Activated naive CD4-positive, alpha-beta T cell treated with anti-CD3 and anti-CD28 coated beads for 36 hours (primary cell): ENCODE measurements at regions of chr12 and their contacts with region 1.

Region 1: GRCh38 chr12:40117818-40118217 is 11.9 kb upstream of the SLC2A13 start:
- DNase-seq: no peak
- H3K4me3 Mint-ChIP-seq: no peak overlapping the region
- H3K27ac Mint-ChIP-seq: no peak overlapping the region
- H3K4me1 Mint-ChIP-seq: peaks cover 15% of the 10 kb centered on the region
- H3K27me3 Mint-ChIP-seq: peaks cover 22% of the 10 kb centered on the region

Region 2: DNA sequence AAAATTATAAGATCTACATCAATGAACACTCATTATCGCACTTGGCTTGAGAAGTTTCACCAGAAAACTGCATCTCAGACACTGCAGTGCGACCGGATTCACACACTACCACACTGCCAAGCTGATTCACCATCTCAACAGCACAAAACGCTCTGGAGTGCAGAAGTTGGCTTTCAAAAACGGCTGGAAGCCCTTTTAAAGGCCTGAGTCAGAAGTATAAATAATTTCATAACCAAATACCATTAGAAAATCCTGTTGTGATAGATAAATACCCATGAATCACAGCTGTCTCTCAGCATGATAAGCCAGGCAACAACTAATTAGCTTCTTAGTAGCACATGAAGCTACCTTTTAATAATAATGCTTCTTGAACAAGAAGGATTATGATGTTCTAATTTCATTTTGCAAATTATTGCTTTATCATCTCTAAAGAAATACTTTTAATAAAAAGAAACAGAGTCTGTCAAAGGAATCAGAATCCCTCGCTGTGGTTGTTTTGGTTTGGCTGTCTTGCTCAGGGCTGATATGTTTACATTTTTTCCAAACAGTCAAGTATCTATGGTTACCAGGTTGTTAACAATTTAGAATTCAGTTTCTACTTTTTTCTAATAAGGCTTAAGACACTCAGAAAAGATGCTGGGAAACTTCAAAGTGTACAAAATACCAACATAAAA is 63.1 kb before region 1 on chr12:
- CTCF ChIA-PET with region 1: no interaction called
- intact Hi-C with region 1: no loop called
- DNase-seq: no peak
- H3K4me3 Mint-ChIP-seq: no peak overlapping the region
- H3K27ac Mint-ChIP-seq: no peak overlapping the region
- H3K4me1 Mint-ChIP-seq: no peaks in the 10 kb centered on the region
- H3K27me3 Mint-ChIP-seq: no peaks in the 10 kb centered on the region

Region 3: DNA sequence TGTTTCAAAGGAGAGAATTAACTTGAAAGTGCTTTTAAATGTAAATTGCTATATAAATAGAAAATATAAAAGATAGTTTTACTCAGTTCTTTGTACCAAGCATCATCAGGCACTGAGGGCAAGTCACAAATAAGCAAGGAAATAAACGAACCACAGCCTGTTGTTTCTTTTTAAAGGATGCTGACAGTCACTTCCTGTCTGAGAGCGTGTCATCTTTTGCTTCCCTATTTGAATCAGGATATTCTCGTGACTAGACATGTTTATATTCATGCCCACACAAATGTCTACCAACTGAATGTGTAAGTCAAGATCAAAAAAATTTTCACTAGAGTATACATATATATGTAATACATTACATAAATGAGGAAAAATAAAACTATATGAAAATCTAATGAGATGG is 19.4 kb after region 1 on chr12:
- CTCF ChIA-PET with region 1: no interaction called
- intact Hi-C with region 1: loop called (anchors 1 kb)
- DNase-seq: peak; percentile 20
- H3K4me3 Mint-ChIP-seq: no peak overlapping the region
- H3K27ac Mint-ChIP-seq: no peak overlapping the region
- H3K4me1 Mint-ChIP-seq: peaks cover 7% of the 10 kb centered on the region
- H3K27me3 Mint-ChIP-seq: peaks cover 6% of the 10 kb centered on the region

Region 4: GRCh38 chr12:40168868-40169267 is 51.0 kb after region 1 on chr12:
- CTCF ChIA-PET with region 1: interaction called, 4 read pairs
- intact Hi-C with region 1: loop called (anchors 2 kb)
- DNase-seq: no peak
- H3K4me3 Mint-ChIP-seq: no peak overlapping the region
- H3K27ac Mint-ChIP-seq: no peak overlapping the region
- H3K4me1 Mint-ChIP-seq: peaks cover 8% of the 10 kb centered on the region
- H3K27me3 Mint-ChIP-seq: peaks cover 10% of the 10 kb centered on the region